MCF 10A (cell line): ENCODE measurements at regions of chr3 and their contacts with region 1.

Region 1: GRCh38 chr3:23761440-23761896 is 44.3 kb upstream of the UBE2E1 start:
- DNase-seq: peak; percentile 66
- H3K4me3 Mint-ChIP-seq: no peak overlapping the region
- H3K27ac Mint-ChIP-seq: no peak overlapping the region
- H3K4me1 Mint-ChIP-seq: no peaks in the 10 kb centered on the region
- H3K27me3 Mint-ChIP-seq: no peaks in the 10 kb centered on the region
- CTCF ChIP-seq: peak; percentile 45

Region 2: DNA sequence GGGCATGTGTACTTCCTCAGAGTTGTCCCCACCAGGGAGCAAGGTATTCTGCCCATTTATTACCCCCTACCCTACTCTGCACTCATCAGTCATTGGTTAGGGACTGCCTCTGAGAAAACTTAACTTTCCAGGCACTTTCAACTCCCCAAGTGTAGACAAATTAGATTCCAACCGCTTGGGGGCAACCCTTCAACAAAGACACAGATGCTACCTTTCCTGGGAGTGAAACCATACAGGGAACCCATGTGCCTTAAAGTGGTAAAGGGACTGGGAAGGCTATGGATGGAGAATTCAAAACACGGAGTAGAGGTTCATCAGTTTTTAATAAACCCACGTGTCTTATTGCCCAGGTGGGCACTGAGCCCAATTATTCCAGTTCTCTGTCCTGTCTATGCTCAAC is 577.7 kb before region 1 on chr3:
- CTCF ChIA-PET with region 1: interaction called, 3 read pairs
- POLR2A ChIA-PET with region 1: no interaction called
- intact Hi-C with region 1: loop called (anchors 1 kb)
- DNase-seq: peak; percentile 79
- H3K4me3 Mint-ChIP-seq: no peak overlapping the region
- H3K27ac Mint-ChIP-seq: no peak overlapping the region
- H3K4me1 Mint-ChIP-seq: no peaks in the 10 kb centered on the region
- H3K27me3 Mint-ChIP-seq: no peaks in the 10 kb centered on the region
- CTCF ChIP-seq: peak; percentile 64

Region 3: DNA sequence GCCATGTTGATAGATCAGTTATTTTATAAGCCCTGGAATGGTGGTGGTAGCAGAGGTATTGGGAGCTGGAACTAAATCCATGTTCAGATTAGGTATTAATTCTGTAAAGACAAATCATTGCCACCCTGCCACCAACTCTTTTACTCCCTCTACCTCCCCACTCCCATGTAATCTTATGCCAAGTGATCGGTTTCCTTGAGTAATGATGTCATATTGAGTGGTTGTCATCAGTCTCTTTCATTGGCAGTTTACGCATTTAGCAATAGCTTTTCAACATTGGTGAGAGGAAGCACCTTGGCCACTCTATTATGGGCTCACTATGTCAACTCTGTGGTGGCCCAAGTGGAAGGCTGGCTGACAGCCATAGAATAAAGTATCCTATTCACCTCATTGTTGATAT is 316.6 kb before region 1 on chr3:
- CTCF ChIA-PET with region 1: no interaction called
- POLR2A ChIA-PET with region 1: no interaction called
- intact Hi-C with region 1: loop called (anchors 5 kb)
- DNase-seq: no peak
- H3K4me3 Mint-ChIP-seq: no peak overlapping the region
- H3K27ac Mint-ChIP-seq: no peak overlapping the region
- H3K4me1 Mint-ChIP-seq: peaks cover 14% of the 10 kb centered on the region
- H3K27me3 Mint-ChIP-seq: no peaks in the 10 kb centered on the region
- CTCF ChIP-seq: no peak

Region 4: GRCh38 chr3:23706111-23706510 is 55.4 kb before region 1 on chr3:
- CTCF ChIA-PET with region 1: no interaction called
- POLR2A ChIA-PET with region 1: no interaction called
- intact Hi-C with region 1: no loop called
- DNase-seq: no peak
- H3K4me3 Mint-ChIP-seq: no peak overlapping the region
- H3K27ac Mint-ChIP-seq: no peak overlapping the region
- H3K4me1 Mint-ChIP-seq: no peaks in the 10 kb centered on the region
- H3K27me3 Mint-ChIP-seq: no peaks in the 10 kb centered on the region
- CTCF ChIP-seq: no peak

Region 5: DNA sequence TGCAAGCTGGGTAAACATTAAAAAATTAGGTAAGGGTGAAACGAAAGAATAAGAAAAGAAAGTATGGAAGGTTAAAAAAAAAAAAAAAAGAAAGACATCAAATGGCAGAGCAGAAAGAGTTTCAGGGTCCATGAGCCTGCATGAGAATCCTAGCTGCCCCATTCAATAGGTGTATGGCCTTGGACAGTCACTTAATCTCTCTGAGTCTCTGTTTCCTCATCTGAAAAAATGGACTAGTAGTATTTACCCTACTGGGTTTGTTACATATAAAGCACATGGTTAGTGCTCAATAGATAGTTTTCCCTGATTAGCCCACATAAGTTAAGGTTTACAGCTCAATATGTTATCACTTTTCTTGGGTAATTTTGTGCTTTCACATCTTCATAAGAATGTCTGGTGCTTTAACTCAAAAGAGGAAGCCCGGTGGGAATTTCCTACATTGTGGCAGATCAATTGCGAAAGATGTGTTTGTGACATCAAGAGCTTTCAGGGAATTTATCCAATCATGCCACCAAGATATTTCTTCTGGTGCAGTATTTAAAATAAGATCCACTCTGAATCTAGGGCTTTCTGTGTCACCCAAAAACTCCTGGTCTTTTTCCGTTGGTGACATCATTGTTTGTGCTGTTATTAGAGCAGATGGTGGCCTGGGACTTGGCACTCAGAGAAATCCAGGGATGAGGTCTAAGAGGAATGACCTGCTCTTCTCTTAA is 12.9 kb before region 1 on chr3:
- CTCF ChIA-PET with region 1: interaction called, 11 read pairs
- POLR2A ChIA-PET with region 1: interaction called, 4 read pairs
- intact Hi-C with region 1: no loop called
- DNase-seq: peak; percentile 79
- H3K4me3 Mint-ChIP-seq: no peak overlapping the region
- H3K27ac Mint-ChIP-seq: peak overlapping the region; percentile 64
- H3K4me1 Mint-ChIP-seq: peaks cover 30% of the 10 kb centered on the region
- H3K27me3 Mint-ChIP-seq: no peaks in the 10 kb centered on the region
- CTCF ChIP-seq: no peak

Region 6: DNA sequence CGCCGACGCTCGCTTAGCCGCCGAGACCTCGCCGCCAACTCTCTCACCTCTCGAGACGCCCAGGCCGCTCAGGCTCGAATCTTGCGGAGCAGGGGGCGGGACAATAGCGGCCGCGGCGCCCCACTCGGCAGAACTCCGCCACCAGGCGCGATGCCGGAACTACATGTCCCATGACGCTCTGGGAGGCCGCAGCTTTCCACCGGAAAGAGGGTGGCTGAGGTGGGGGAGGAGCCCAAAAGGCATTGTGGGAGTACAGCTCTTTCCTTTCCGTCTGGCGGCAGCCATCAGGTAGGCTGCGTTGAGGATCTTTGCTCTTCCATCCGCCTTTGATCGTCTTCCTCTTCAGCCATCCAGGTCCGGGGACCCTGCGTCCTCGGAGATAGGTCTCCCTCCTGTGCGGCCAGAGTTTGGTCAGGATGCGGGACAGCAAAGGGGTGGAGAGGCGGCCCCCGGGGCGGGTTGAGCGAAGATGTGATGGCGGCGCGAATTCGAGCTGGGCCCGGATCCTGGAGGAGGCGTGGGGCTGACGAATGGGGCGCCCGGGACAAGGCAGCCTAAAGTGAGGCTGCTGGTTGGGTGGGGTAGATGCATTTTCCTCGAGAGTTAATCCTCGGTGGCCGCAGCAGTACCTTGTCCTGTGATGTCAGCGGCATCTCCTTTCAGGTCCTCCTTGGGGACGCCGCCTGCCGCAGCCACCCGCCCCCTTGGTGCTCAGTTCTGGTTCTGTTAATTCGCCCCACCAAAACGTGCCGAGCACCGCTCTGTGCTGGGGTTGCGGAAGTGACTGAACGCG is 155.6 kb after region 1 on chr3 and contains the starts of genes NKIRAS1 and RPL15:
- CTCF ChIA-PET with region 1: no interaction called
- POLR2A ChIA-PET with region 1: no interaction called
- intact Hi-C with region 1: no loop called
- DNase-seq: peak; percentile 98
- H3K4me3 Mint-ChIP-seq: peak within 1 kb of the TSS; percentile 92
- H3K27ac Mint-ChIP-seq: peak within 1 kb of the TSS; percentile 76
- H3K4me1 Mint-ChIP-seq: peaks cover 26% of the 10 kb centered on the region
- H3K27me3 Mint-ChIP-seq: no peaks in the 10 kb centered on the region
- CTCF ChIP-seq: peak; percentile 42
- total RNA-seq, gene NKIRAS1: 6.8 and 9.7 TPM in 2 replicates
- total RNA-seq, gene RPL15: 2,310 and 2,617 TPM in 2 replicates